Mammary epithelial cell (primary cell): ENCODE measurements at regions of chr18 and their contacts with region 1.

Region 1: GRCh38 chr18:63882333-63883141 is 5.0 kb upstream of the SERPINB2 start:
- DNase-seq: peak; percentile 100
- H3K4me3 ChIP-seq: peak overlapping the region in 1 of 3 experiments; percentile 6
- H3K27ac ChIP-seq: peak overlapping the region; percentile 99
- H3K4me1 ChIP-seq: peaks cover 30% of the 10 kb centered on the region
- H3K27me3 ChIP-seq: no peaks in the 10 kb centered on the region
- CTCF ChIP-seq: no peak

Region 2: DNA sequence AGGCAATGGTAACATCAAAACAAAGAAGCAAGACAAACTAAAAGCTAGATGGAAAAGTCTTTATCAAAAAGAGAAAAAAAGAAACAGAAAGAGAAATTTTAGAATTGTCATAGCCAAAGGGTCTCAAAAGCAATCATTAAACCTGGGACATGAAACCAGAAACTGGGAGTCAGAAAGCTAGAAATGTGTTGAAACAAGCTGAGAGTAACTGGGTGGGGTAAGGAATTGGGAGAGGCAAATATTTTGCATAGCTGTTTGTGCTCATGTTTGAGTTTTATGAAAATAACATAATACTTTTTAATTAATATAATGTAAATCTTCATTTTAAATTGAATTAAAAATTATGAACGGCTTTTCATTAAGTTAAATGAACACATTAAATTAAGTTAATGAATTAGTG is 15.2 kb before region 1 on chr18:
- CTCF ChIA-PET with region 1: no interaction called
- dilution Hi-C with region 1: no loop called
- in situ Hi-C with region 1: no loop called
- intact Hi-C with region 1: loop called (anchors 2 kb)
- DNase-seq: peak; percentile 63
- H3K4me3 ChIP-seq: no peak overlapping the region
- H3K27ac ChIP-seq: peak overlapping the region; percentile 77
- H3K4me1 ChIP-seq: peaks cover 22% of the 10 kb centered on the region
- H3K27me3 ChIP-seq: no peaks in the 10 kb centered on the region
- CTCF ChIP-seq: no peak

Region 3: GRCh38 chr18:63969960-63970802 is 87.6 kb after region 1 on chr18 and contains the start of gene SERPINB8:
- CTCF ChIA-PET with region 1: no interaction called
- dilution Hi-C with region 1: no loop called
- in situ Hi-C with region 1: no loop called
- intact Hi-C with region 1: loop called (anchors 10 kb)
- DNase-seq: peak; percentile 98
- H3K4me3 ChIP-seq: peak within 1 kb of the TSS; percentile 81 to 84 (median 83)
- H3K27ac ChIP-seq: peak within 1 kb of the TSS; percentile 99
- H3K4me1 ChIP-seq: peaks cover 29% of the 10 kb centered on the region
- H3K27me3 ChIP-seq: no peaks in the 10 kb centered on the region
- CTCF ChIP-seq: no peak
- total RNA-seq, gene SERPINB8: 30.0 to 68.4 TPM